ENCODE measurements at regions of chr6 and their contacts with region 1.

Region 1: DNA sequence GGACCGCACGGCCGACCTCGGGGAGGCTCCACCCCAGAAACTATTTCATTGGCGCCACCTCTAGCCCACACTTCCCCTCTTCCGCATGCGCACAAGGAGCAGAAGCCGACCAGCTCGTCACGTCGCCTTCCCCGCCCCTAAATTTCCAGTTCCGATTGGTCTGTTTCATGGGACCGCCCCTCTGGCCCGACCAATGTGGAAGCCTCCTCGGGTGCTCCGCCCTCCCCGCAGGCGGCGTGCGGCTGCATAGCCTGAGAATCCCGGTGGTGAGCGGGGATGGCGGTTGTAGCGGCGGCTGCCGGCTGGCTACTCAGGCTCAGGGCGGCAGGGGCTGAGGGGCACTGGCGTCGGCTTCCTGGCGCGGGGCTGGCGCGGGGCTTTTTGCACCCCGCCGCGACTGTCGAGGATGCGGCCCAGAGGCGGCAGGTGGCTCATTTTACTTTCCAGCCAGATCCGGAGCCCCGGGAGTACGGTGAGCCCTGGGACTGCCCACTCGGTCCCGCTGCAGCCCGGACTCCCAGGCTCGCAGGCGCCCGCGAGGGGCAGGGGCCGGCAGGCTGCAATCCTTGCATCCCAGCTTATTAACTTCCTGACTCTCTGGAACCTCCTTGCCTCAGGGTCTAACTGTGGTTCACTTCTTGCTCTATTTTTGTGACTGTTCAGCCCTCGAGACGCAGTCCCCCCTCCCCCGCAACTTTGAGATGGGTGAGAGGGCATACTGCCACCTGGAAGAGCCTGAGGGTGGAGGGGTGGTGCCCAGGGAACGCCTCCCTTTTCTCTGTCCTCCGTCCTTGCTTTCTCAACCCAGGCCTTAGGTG is at the start of gene BCKDHB:
- DNase-seq: peak; percentile 99
- H3K4me3 Mint-ChIP-seq: peak within 1 kb of the TSS; percentile 94
- H3K27ac Mint-ChIP-seq: peak within 1 kb of the TSS; percentile 80
- H3K4me1 Mint-ChIP-seq: peaks cover 15% of the 10 kb centered on the region
- H3K27me3 Mint-ChIP-seq: no peaks in the 10 kb centered on the region
- total RNA-seq, gene BCKDHB: 16.4 to 17.7 TPM

Region 2: DNA sequence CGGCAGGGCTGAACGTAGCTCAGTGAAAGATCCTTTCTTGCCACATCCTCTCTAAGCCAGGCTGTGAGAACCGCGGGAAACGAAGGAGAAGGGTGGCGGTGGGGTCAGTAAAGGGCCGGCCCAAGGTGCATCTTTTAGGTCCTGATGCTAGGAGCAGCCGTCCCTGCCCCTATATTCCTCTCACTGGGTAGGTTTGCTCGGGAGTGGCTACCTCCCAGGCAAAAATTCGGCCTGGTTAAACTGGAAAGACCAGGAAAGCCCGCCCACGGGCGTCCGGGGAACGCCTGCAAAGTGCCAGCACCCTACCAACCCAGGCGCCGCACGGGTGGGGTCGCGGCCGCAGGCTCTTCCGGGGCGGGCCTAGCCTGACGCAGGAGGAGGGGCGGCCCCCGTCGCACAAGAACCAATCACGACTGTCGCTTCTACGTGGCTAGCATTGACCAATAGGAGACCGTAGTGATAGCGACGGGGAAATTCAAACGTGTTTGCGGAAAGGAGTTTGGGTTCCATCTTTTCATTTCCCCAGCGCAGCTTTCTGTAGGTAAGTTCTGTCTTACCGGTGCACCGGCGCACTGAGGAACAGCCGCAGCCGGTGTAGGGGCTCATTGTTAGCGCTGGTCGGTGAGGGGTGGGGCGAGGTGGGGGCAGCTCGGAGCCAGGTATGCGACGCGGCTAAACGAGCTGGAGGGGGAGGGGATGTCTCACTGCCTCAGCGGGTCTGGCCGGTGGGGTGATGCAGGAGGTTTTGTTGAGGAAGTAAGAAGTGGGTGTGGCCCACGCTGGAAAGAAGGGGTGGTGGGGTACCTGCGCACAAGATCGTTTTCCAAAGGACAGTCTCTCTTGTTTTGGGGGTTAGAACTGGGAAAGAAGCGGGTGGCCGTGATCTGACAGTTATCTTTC is 102.2 kb before region 1 on chr6 and contains the start of gene TTK:
- CTCF ChIA-PET with region 1: no interaction called
- POLR2A ChIA-PET with region 1: interaction called, 7 read pairs
- intact Hi-C with region 1: loop called (anchors 1 kb)
- DNase-seq: peak; percentile 94
- H3K4me3 Mint-ChIP-seq: peak within 1 kb of the TSS; percentile 94
- H3K27ac Mint-ChIP-seq: peak within 1 kb of the TSS; percentile 86
- H3K4me1 Mint-ChIP-seq: peaks cover 28% of the 10 kb centered on the region
- H3K27me3 Mint-ChIP-seq: peaks cover 3% of the 10 kb centered on the region
- total RNA-seq, gene TTK: 37.2 to 39.4 TPM

Region 3: DNA sequence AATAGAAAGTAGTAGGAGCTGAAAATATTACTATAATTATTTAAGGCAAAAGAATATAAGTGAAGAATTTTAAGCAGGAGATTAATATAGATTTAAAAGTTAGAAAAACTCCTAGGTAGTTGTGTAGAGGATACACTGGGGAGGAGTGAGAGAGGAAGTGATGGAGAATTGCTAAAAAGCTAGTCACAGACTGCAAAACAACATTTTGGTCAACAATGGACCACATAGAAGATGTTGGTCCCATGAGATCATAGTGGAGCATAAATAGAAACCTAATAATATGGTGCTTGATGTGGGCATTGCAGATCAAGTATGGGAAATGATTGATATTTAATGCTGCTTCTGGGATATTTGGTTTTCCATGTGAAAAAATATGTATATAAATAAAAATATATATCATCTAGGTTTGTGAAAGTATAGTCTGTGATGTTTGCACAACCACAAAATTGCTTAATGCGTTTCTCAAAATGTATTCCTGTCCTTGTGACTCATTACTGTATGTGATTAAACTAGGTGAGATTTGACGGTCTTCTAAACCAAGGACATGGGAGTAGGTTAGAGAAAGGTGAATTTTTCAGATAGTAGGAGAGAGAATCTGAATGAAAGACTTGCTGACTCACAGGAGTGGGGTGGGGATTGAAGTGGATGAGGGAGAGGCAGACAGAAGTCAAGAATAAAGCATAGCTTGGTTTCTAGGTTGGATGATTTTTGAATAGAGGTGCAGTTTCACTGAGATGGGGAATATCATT is 173.8 kb after region 1 on chr6:
- CTCF ChIA-PET with region 1: no interaction called
- POLR2A ChIA-PET with region 1: no interaction called
- intact Hi-C with region 1: loop called (anchors 1 kb)
- DNase-seq: peak; percentile 9
- H3K4me3 Mint-ChIP-seq: no peak overlapping the region
- H3K27ac Mint-ChIP-seq: no peak overlapping the region
- H3K4me1 Mint-ChIP-seq: peaks cover 11% of the 10 kb centered on the region
- H3K27me3 Mint-ChIP-seq: no peaks in the 10 kb centered on the region

Measured in activated CD4-positive, alpha-beta memory T cell treated with anti-CD3 and anti-CD28 coated beads for 36 hours (primary cell).